Activated naive CD4-positive, alpha-beta T cell treated with anti-CD3 and anti-CD28 coated beads for 36 hours (primary cell): ENCODE measurements at regions of chr2 and their contacts with region 1.

Region 1: GRCh38 chr2:163182764-163183354 is 344.3 kb upstream of the KCNH7 start:
- DNase-seq: no peak
- H3K4me3 Mint-ChIP-seq: no peak overlapping the region
- H3K27ac Mint-ChIP-seq: no peak overlapping the region
- H3K4me1 Mint-ChIP-seq: no peaks in the 10 kb centered on the region
- H3K27me3 Mint-ChIP-seq: no peaks in the 10 kb centered on the region

Region 2: GRCh38 chr2:163626639-163627109 is 443.8 kb after region 1 on chr2:
- CTCF ChIA-PET with region 1: no interaction called
- intact Hi-C with region 1: loop called (anchors 10 kb)
- DNase-seq: no peak
- H3K4me3 Mint-ChIP-seq: no peak overlapping the region
- H3K27ac Mint-ChIP-seq: no peak overlapping the region
- H3K4me1 Mint-ChIP-seq: no peaks in the 10 kb centered on the region
- H3K27me3 Mint-ChIP-seq: no peaks in the 10 kb centered on the region